Naive thymus-derived CD4-positive, alpha-beta T cell (primary cell): ENCODE measurements at regions of chr16 and their contacts with region 1.

Region 1: DNA sequence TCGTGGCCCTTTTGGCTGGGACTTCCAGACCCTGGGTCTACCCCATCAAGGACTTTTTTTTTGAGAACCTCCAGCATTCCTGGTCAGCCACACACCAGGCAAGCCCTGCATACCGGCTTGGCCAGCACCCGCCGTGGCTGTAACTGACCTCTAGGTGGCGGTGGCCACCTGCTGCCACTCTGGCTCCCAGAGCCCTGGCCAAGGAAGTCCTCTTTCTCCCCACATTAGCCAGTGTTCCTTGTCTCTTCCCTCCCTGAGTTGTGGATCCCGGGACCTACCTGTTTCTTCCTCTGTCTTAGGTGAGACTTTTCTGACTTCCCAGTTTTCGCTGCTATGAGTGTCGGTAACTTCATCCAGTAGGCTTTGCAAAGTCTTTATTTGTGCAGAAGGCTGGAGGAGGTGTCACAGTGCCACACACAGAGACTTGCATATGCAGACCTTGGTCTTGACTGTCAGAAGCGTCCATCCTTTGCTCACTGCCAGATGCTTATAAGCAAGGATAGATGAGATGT is 348.3 kb downstream of the CPPED1 start:
- DNase-seq: peak in 6 of 9 donors; percentile 19 to 55 (median 22)
- ATAC-seq: peak; percentile 54
- H3K4me3 ChIP-seq: no peak overlapping the region
- H3K4me3 Mint-ChIP-seq: no peak overlapping the region
- H3K27ac ChIP-seq: no peak overlapping the region
- H3K27ac Mint-ChIP-seq: peak overlapping the region in 3 of 9 donors; percentile 19 to 43 (median 26)
- H3K4me1 ChIP-seq: peaks cover 0 to 24% of the 10 kb centered on the region in 2 donors
- H3K4me1 Mint-ChIP-seq: peaks cover 28 to 44% (median 35%) of the 10 kb centered on the region in 7 donors
- H3K27me3 ChIP-seq: no peaks in the 10 kb centered on the region
- H3K27me3 Mint-ChIP-seq: no peaks in the 10 kb centered on the region

Region 2: DNA sequence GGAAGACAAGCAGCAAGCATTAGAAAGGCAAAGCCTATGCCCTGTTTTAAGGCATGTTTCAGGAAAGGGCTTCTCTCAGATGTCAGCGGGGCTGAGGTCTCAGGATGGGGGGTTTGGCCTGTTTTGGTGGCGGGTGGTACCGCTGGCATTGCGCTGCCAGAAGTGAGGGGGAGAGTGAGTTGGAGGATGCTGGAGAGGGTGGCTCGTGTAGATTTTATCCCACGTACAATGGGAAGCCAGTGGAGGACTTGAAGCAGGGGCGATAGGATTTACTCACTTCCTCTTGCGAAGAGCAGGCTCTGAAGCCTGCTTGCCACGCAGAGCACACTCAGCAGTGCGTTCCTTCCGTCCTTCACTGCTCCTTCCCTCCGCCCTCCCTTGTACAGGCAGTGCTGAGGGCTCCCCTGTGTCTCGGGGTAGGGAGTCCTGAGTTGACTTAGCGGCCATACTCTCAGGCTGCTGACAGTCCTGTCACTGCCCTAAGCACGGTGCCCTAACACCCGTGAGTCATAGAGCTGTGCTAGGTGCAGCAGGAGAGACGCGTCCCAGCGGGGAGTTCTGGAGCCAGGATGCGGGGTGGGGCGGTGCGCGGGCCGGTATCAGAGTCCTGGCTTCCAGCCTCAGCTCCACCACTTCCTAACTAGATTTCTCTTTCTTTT is 365.7 kb before region 1 on chr16:
- CTCF ChIA-PET with region 1: no interaction called
- POLR2A ChIA-PET with region 1: no interaction called
- intact Hi-C with region 1: loop called in 1 of 2 experiments (anchors 10 kb)
- DNase-seq: peak; percentile 20 to 60 (median 49)
- ATAC-seq: peak; percentile 89
- H3K4me3 ChIP-seq: peak overlapping the region; percentile 71
- H3K4me3 Mint-ChIP-seq: peak overlapping the region; percentile 81 to 98 (median 86)
- H3K27ac ChIP-seq: peak overlapping the region; percentile 76
- H3K27ac Mint-ChIP-seq: peak overlapping the region; percentile 87 to 99 (median 97)
- H3K4me1 ChIP-seq: peaks cover 0 to 30% of the 10 kb centered on the region in 2 donors
- H3K4me1 Mint-ChIP-seq: peaks cover 25 to 63% (median 57%) of the 10 kb centered on the region in 7 donors
- H3K27me3 ChIP-seq: no peaks in the 10 kb centered on the region
- H3K27me3 Mint-ChIP-seq: no peaks in the 10 kb centered on the region